Mucosa of descending colon (tissue), 3 donors: ENCODE measurements at regions of chr16 and their contacts with region 1.

Region 1: DNA sequence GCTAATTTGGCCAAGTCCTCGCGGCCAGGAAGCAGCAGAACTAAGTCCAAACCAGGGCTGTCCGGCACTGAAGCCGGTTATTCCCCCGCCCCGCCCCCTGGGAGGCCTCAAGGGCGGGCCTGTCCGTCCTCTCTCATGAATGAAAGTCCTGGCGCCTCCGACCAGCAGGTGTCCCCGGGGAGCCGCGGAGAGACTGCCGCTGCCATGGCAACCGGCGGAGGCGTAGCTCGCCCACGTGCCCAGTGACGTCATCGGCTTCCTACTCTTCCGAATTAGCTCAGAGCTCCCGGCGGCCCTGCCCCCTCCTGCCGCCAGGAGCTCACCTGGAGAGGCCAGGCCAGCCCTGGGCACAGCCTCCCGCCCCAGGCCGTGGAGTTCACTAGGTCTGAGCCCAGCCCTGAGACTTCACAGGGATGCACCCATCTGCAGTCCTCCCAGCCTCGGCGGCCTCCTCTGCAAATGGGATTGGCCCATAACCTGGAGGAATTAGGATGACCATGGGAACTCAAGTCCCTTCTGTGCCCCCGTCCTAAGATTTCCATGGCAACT is 1.3 kb downstream of the SPATA2L start:
- DNase-seq: peak; percentile 99 to 100 (median 100)
- ATAC-seq: peak; percentile 71
- H3K4me3 ChIP-seq: no peak overlapping the region
- H3K4me1 ChIP-seq: peaks cover 16% of the 10 kb centered on the region
- CTCF ChIP-seq: peak; percentile 84

Region 2: GRCh38 chr16:89581045-89581690 is 119.0 kb before region 1 on chr16:
- intact Hi-C with region 1: no loop called
- DNase-seq: peak in 1 of 3 donors; percentile 47
- ATAC-seq: no peak
- H3K4me3 ChIP-seq: no peak overlapping the region
- H3K4me1 ChIP-seq: no peaks in the 10 kb centered on the region
- CTCF ChIP-seq: no peak

Region 3: GRCh38 chr16:89798832-89799370 is 98.7 kb after region 1 on chr16:
- intact Hi-C with region 1: loop called in 1 of 2 experiments (anchors 10 kb)
- DNase-seq: peak in 1 of 3 donors; percentile 17
- ATAC-seq: no peak
- H3K4me3 ChIP-seq: no peak overlapping the region
- H3K4me1 ChIP-seq: no peaks in the 10 kb centered on the region
- CTCF ChIP-seq: no peak